ENCODE measurements at regions of chr12 and their contacts with region 1.

Region 1: GRCh38 chr12:75641031-75641780 is 129.8 kb upstream of the KRR1 start:
- DNase-seq: peak; percentile 67
- H3K4me3 Mint-ChIP-seq: no peak overlapping the region
- H3K27ac Mint-ChIP-seq: no peak overlapping the region
- H3K4me1 Mint-ChIP-seq: peaks cover 31% of the 10 kb centered on the region
- H3K27me3 Mint-ChIP-seq: peaks cover 3% of the 10 kb centered on the region

Region 2: DNA sequence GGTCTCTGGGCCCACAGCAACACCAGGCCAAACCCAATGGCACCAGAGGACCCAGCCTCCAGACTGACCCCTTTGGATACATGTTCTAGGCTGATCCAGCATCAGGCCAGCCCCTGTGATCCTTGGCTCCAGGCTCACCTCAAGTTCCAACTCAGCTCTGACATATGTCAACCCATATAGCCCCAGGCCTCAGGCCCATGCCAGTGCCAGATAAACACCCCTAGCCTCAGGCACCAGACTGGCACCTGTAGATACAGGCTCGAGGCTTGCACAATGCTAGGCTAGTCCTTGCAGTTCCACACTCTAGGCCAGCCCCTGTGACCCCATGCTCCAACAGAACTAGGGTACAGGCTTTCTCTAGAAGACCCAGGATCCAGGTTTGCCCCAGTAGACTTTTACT is 719.1 kb before region 1 on chr12:
- CTCF ChIA-PET with region 1: no interaction called
- POLR2A ChIA-PET with region 1: no interaction called
- intact Hi-C with region 1: no loop called
- DNase-seq: no peak
- H3K4me3 Mint-ChIP-seq: no peak overlapping the region
- H3K27ac Mint-ChIP-seq: no peak overlapping the region
- H3K4me1 Mint-ChIP-seq: no peaks in the 10 kb centered on the region
- H3K27me3 Mint-ChIP-seq: no peaks in the 10 kb centered on the region

Region 3: GRCh38 chr12:75658901-75659383 is 17.7 kb after region 1 on chr12:
- CTCF ChIA-PET with region 1: no interaction called
- POLR2A ChIA-PET with region 1: interaction called, 6 read pairs
- intact Hi-C with region 1: loop called (anchors 1 kb)
- DNase-seq: peak; percentile 27
- H3K4me3 Mint-ChIP-seq: no peak overlapping the region
- H3K27ac Mint-ChIP-seq: no peak overlapping the region
- H3K4me1 Mint-ChIP-seq: peaks cover 14% of the 10 kb centered on the region
- H3K27me3 Mint-ChIP-seq: peaks cover under 1% of the 10 kb centered on the region

Region 4: DNA sequence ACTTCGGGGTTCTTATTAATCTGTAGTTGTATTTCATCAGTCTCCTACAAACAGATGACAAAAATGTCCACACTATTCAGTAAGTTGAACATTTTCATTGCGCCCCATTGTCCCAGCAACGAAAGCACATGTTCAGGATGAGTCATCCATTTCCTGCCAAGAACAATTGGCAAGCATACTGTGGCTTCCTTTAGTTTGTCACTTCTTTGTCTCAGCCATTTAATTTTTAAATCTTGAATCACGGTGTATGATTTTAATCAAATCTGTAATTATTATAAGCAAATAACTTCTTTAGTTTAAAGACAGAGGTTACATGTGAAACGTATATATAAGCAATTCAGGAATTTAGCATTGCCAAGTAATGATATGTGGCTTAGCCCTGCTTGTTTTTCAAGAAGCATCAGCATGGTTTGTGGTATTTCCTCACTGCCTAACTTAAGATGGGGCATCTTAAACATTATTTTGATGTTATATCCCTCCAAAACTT is 81.6 kb after region 1 on chr12:
- CTCF ChIA-PET with region 1: no interaction called
- POLR2A ChIA-PET with region 1: no interaction called
- intact Hi-C with region 1: loop called (anchors 5 kb)
- DNase-seq: peak; percentile 56
- H3K4me3 Mint-ChIP-seq: no peak overlapping the region
- H3K27ac Mint-ChIP-seq: peak overlapping the region; percentile 28
- H3K4me1 Mint-ChIP-seq: peaks cover 15% of the 10 kb centered on the region
- H3K27me3 Mint-ChIP-seq: no peaks in the 10 kb centered on the region

Region 5: GRCh38 chr12:75944097-75944904 is 303.1 kb after region 1 on chr12:
- CTCF ChIA-PET with region 1: no interaction called
- POLR2A ChIA-PET with region 1: no interaction called
- intact Hi-C with region 1: loop called (anchors 2 kb)
- DNase-seq: peak; percentile 42
- H3K4me3 Mint-ChIP-seq: peak overlapping the region; percentile 34
- H3K27ac Mint-ChIP-seq: peak overlapping the region; percentile 95
- H3K4me1 Mint-ChIP-seq: peaks cover 29% of the 10 kb centered on the region
- H3K27me3 Mint-ChIP-seq: no peaks in the 10 kb centered on the region